CD4-positive, alpha-beta memory T cell (primary cell): ENCODE measurements at regions of chr20 and their contacts with region 1.

Region 1: GRCh38 chr20:1674361-1674760 is 16.8 kb upstream of the SIRPG start:
- DNase-seq: peak; percentile 39 to 66 (median 44)
- H3K4me3 ChIP-seq: peak overlapping the region in 1 of 2 donors; percentile 15
- H3K4me3 Mint-ChIP-seq: peak overlapping the region in 7 of 8 donors; percentile 49 to 89 (median 74)
- H3K27ac ChIP-seq: peak overlapping the region; percentile 27
- H3K27ac Mint-ChIP-seq: peak overlapping the region; percentile 76 to 91 (median 85)
- H3K4me1 ChIP-seq: peaks cover 82% of the 10 kb centered on the region
- H3K4me1 Mint-ChIP-seq: peaks cover 67 to 97% (median 85%) of the 10 kb centered on the region in 4 donors
- H3K27me3 ChIP-seq: no peaks in the 10 kb centered on the region
- H3K27me3 Mint-ChIP-seq: no peaks in the 10 kb centered on the region

Region 2: GRCh38 chr20:1663917-1664316 is 10.4 kb before region 1 on chr20:
- CTCF ChIA-PET with region 1: interaction called, 9 read pairs
- POLR2A ChIA-PET with region 1: interaction called, 31 read pairs
- intact Hi-C with region 1: loop called (anchors 1 kb)
- DNase-seq: peak in 1 of 5 donors; percentile 24
- H3K4me3 ChIP-seq: peak overlapping the region in 1 of 2 donors; percentile 44
- H3K4me3 Mint-ChIP-seq: peak overlapping the region in 7 of 8 donors; percentile 73 to 88 (median 81)
- H3K27ac ChIP-seq: peak overlapping the region; percentile 54
- H3K27ac Mint-ChIP-seq: peak overlapping the region; percentile 73 to 97 (median 91)
- H3K4me1 ChIP-seq: peaks cover 96% of the 10 kb centered on the region
- H3K4me1 Mint-ChIP-seq: peaks cover 72 to 93% (median 82%) of the 10 kb centered on the region in 4 donors
- H3K27me3 ChIP-seq: no peaks in the 10 kb centered on the region
- H3K27me3 Mint-ChIP-seq: no peaks in the 10 kb centered on the region